ENCODE measurements at regions of chr15 and their contacts with region 1.

Region 1: GRCh38 chr15:89358755-89359439 is 24.3 kb upstream of the POLG start:
- DNase-seq: peak; percentile 77 to 87 (median 85)
- H3K4me3 ChIP-seq: peak overlapping the region in 6 of 7 experiments; percentile 38 to 77 (median 62)
- H3K27ac ChIP-seq: no peak overlapping the region
- H3K4me1 ChIP-seq: peaks cover 0 to 34% (median 18%) of the 10 kb centered on the region in 4 experiments
- H3K27me3 ChIP-seq: peaks cover 0 to 97% (median 55%) of the 10 kb centered on the region in 5 experiments

Region 2: GRCh38 chr15:89338036-89338435 is 20.9 kb before region 1 on chr15:
- CTCF ChIA-PET with region 1: interaction called, 36 read pairs
- POLR2A ChIA-PET with region 1: no interaction called
- DNase-seq: no peak
- H3K4me3 ChIP-seq: no peak overlapping the region
- H3K27ac ChIP-seq: no peak overlapping the region
- H3K4me1 ChIP-seq: peaks cover 3 to 21% (median 18%) of the 10 kb centered on the region in 4 experiments
- H3K27me3 ChIP-seq: peaks cover 0 to 5% (median 2%) of the 10 kb centered on the region in 5 experiments

Region 3: GRCh38 chr15:89378296-89379151 is 19.6 kb after region 1 on chr15:
- CTCF ChIA-PET with region 1: interaction called, 20 read pairs
- POLR2A ChIA-PET with region 1: no interaction called
- DNase-seq: peak; percentile 34 to 68 (median 60)
- H3K4me3 ChIP-seq: peak overlapping the region; percentile 7 to 67 (median 34)
- H3K27ac ChIP-seq: no peak overlapping the region
- H3K4me1 ChIP-seq: peaks cover 0 to 20% (median 12%) of the 10 kb centered on the region in 4 experiments
- H3K27me3 ChIP-seq: peaks cover 13 to 99% (median 55%) of the 10 kb centered on the region in 5 experiments

Region 4: GRCh38 chr15:89399238-89400120 is 40.6 kb after region 1 on chr15:
- CTCF ChIA-PET with region 1: interaction called, 20 read pairs
- POLR2A ChIA-PET with region 1: no interaction called
- DNase-seq: peak in 2 of 3 donors; percentile 39 to 48
- H3K4me3 ChIP-seq: peak overlapping the region in 6 of 7 experiments; percentile 24 to 63 (median 40)
- H3K27ac ChIP-seq: no peak overlapping the region
- H3K4me1 ChIP-seq: peaks cover 0 to 36% (median 32%) of the 10 kb centered on the region in 4 experiments
- H3K27me3 ChIP-seq: peaks cover 30 to 78% (median 51%) of the 10 kb centered on the region in 5 experiments

Region 5: GRCh38 chr15:89416141-89416853 is 57.4 kb after region 1 on chr15:
- CTCF ChIA-PET with region 1: interaction called, 144 read pairs
- POLR2A ChIA-PET with region 1: no interaction called
- DNase-seq: peak; percentile 88 to 93 (median 91)
- H3K4me3 ChIP-seq: no peak overlapping the region
- H3K27ac ChIP-seq: no peak overlapping the region
- H3K4me1 ChIP-seq: peaks cover 0 to 14% (median 5%) of the 10 kb centered on the region in 4 experiments
- H3K27me3 ChIP-seq: peaks cover 23 to 100% (median 56%) of the 10 kb centered on the region in 5 experiments

Region 6: DNA sequence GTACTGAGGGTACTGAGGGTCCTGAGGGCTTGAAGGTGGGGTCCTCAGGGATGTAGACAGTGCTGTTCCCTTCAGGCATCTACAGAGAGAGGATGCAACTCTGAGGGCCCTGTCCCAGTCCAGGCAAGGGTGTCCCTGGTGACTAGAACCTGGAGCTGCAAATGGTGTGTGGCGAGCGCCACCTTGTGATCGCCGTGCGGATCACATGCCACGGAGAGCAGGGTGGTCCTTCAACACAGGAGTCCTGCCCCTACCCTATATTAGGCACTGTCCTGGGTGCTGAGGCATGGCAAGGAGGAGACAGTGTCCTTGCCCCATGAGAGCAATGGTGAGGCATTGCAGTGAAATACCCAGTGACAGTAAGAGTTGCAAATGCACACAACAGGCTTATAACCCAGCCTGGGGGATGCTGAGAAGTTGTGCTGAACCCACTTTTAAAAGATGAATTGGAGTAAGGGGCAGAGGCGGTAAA is 113.9 kb after region 1 on chr15:
- CTCF ChIA-PET with region 1: interaction called, 54 read pairs
- POLR2A ChIA-PET with region 1: interaction called, 3 read pairs
- DNase-seq: peak; percentile 73 to 80 (median 73)
- H3K4me3 ChIP-seq: no peak overlapping the region
- H3K27ac ChIP-seq: no peak overlapping the region
- H3K4me1 ChIP-seq: peaks cover 0 to 2% (median 0%) of the 10 kb centered on the region in 4 experiments
- H3K27me3 ChIP-seq: peaks cover 0 to 61% (median 14%) of the 10 kb centered on the region in 5 experiments

Region 7: GRCh38 chr15:90001683-90002427 is 643.0 kb after region 1 on chr15:
- CTCF ChIA-PET with region 1: no interaction called
- POLR2A ChIA-PET with region 1: no interaction called
- DNase-seq: peak; percentile 58 to 84 (median 72)
- H3K4me3 ChIP-seq: peak overlapping the region; percentile 48 to 97 (median 74)
- H3K27ac ChIP-seq: peak overlapping the region in 1 of 2 experiments; percentile 43
- H3K4me1 ChIP-seq: peaks cover 7 to 65% (median 25%) of the 10 kb centered on the region in 4 experiments
- H3K27me3 ChIP-seq: no peaks in the 10 kb centered on the region